ENCODE measurements at regions of chr5 and their contacts with region 1.

Region 1: GRCh38 chr5:93582677-93583438 is at the start of gene NR2F1:
- DNase-seq: no peak
- CTCF ChIP-seq: no peak

Region 2: DNA sequence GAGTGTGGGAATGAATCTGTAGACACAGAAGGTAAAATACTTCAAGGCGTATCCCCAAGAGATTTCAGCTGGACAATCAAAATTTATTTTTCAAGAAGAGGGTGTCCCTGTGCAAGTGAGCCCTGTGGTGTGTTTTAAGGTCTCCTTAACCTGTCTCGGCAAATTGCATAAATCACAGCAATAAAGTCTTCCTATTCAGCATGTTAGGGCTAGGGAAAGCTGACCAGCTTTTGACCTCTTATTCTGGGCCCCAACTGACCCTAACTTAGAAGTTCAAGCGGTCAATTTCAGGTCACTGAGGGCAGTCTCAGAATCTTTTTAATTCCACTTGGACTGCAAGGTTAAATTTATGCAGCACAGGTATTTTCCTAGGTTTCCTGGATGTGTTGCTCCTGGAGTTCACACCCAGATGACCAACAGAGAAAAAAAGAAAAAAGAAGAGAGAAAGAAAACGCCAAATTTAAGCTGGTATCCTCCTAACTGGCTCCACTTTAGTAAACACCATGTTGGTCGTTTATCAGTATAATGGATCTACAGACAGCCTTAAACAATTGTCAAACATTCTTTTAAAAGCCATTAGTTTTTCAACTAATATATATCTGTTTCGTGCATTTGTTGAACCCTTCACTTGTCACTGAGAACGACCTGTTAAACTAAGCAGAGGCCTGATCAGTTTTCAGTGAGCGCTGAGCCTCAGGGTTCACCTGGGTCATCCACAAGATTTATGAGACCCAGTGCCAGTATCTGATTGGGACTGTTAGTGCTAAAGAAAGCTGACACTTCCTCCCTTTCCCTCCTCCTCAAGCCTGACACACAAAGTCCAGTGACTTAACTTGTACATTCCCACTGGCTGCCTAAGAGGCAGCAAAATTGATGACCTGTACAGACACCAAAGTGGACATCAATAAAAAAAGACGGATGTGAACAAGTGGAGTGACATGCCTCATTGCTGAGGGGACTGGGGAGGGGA is 548.0 kb before region 1 on chr5:
- in situ Hi-C with region 1: no loop called
- DNase-seq: no peak
- CTCF ChIP-seq: no peak

Region 3: DNA sequence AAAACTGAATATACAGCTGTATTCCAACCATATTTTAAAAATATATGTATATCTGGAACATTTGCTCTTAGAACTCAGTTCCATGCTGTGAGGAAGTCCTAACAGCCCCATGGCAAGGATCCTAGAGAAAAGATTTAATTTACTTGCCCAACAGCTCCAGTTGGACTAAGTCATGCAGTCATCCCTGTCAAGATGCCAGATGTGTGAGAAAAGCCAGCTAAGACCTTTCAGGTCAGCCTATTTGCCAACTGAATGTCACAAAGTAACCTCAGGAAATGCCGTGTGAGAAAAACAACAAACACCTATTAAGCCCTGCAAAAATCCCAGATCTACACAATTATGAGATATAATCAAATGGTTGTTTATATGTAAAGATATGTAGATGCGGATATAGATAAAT is 418.2 kb before region 1 on chr5:
- in situ Hi-C with region 1: no loop called
- DNase-seq: no peak
- CTCF ChIP-seq: no peak

Region 4: DNA sequence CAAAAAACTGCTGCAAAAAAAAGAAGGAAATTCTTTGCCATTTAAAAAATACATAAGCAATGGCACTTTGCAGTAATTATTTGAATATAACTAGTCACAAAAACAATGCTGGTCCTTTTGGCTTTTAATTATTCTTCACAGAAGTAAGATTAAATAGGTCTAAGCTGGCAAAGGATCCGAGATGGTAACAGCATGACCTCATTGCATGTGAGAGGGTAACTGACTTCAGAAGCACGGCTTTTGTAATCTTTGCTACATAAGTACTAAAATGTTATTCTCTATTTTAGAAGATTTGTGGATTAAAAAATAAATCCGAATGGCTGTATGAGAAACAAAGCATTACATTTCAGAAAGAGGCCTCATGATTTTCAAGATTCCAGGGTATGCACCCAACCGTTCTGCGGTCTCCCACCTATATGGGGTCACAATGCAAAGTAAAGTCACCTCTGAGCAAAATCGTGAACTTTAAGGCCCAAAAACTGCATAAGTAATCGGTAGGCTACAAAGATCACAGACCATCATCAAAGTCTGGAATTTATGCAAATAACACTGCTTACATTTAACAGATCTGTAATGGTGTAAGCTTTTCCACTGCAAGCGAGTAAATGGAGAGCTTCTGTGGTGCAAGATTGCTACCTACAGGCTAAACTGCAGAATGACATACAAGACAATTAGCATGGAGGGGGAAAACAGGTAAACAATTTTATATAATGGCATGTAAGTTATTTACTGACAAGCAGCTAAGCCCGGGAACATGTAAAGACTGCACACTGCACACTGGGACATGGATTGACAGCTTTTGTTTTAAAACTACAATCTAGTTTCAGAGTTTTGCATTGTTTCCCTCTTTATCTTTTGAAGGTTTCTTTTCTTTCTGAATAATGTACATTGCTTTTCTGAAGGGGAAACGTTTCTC is 1267.2 kb after region 1 on chr5:
- in situ Hi-C with region 1: loop called (anchors 25 kb)
- DNase-seq: peak; percentile 36
- CTCF ChIP-seq: peak; percentile 85

Measured in GM13977 (cell line).